ENCODE measurements at regions of chr5 and their contacts with region 1.

Region 1: DNA sequence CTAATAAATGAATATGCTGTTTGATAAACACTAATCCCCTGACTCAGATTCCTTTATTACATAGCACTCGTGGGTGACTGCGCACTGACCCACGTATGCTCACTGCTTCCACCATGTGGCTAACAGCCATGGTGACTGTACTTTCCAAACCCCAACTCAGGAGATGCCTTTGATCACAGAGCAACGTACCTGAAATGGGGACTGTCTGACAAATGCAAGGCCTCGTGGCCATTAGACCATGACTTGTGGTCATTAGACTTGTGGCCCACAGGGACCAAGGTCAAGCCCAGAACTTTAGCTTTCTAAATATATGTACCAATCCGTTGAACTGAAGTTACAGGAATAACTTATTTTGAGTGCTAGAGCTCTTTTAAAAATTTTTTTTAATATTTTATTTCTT is 46.6 kb downstream of the CYFIP2 start:
- DNase-seq: peak; percentile 55
- H3K4me3 ChIP-seq: no peak overlapping the region
- H3K27ac ChIP-seq: no peak overlapping the region
- H3K4me1 ChIP-seq: no peaks in the 10 kb centered on the region
- H3K27me3 ChIP-seq: no peaks in the 10 kb centered on the region
- CTCF ChIP-seq: peak; percentile 49 to 70
- POLR2A ChIP-seq: no peak

Region 2: GRCh38 chr5:157080286-157080685 is 232.2 kb before region 1 on chr5:
- CTCF ChIA-PET with region 1: no interaction called
- POLR2A ChIA-PET with region 1: no interaction called
- dilution Hi-C with region 1: no loop called
- intact Hi-C with region 1: no loop called
- DNase-seq: no peak
- H3K4me3 ChIP-seq: no peak overlapping the region
- H3K27ac ChIP-seq: no peak overlapping the region
- H3K4me1 ChIP-seq: no peaks in the 10 kb centered on the region
- H3K27me3 ChIP-seq: no peaks in the 10 kb centered on the region
- CTCF ChIP-seq: no peak
- POLR2A ChIP-seq: no peak

Region 3: GRCh38 chr5:157148734-157149615 is 163.5 kb before region 1 on chr5:
- CTCF ChIA-PET with region 1: interaction called, 15 read pairs
- POLR2A ChIA-PET with region 1: no interaction called
- dilution Hi-C with region 1: no loop called
- intact Hi-C with region 1: loop called (anchors 1 kb)
- DNase-seq: peak; percentile 59
- H3K4me3 ChIP-seq: no peak overlapping the region
- H3K27ac ChIP-seq: no peak overlapping the region
- H3K4me1 ChIP-seq: no peaks in the 10 kb centered on the region
- H3K27me3 ChIP-seq: no peaks in the 10 kb centered on the region
- CTCF ChIP-seq: peak; percentile 80 to 81
- POLR2A ChIP-seq: no peak